AG04449 (cell line): ENCODE measurements at regions of chr3 and their contacts with region 1.

Region 1: GRCh38 chr3:160003520-160004128 is 15.0 kb downstream of the IL12A start:
- DNase-seq: no peak
- H3K4me3 ChIP-seq: no peak overlapping the region
- CTCF ChIP-seq: peak; percentile 65

Region 2: DNA sequence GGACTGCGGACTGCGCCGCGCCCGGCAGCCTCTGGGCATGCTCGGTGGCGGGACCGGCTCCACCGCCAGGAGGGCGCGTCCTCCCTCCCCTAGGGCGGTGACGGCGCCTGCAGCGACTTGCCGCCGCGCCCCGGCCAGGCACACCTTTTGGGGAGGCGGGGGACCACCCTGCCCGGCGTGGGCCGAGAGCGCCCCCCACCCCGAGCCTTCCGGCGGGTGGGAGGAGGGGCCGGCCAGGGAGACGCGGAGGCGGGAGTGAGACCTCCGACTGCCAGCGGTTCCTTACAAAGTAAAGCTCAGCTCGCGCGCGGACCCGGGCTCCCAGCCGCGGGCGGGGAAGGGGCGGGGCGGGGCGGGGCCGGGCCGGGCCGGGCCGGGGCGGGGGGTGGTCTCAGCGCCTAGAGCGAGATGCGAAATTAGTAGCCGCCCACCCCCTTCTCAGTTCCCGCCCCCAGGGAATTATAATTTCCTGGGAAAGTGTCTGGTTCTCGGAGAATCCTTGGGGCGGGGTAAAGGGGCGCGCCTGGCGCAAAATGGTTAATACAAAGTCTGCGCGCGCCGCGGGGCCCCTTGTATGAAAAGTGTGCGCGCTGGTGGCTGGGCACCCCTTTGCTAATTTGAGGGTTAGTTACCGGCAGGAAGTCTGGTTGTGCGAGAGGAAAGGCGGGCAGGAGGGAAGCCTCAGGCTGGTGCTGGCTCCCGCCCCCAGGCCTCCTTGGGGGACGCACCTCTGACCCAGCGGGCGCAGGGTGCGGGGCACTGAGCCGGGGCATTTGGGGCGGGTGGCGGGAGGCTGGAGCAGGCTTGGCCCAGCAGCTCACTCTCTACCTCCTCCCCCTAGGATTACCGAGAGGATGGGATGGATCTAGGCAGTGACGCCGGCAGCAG is 239.8 kb before region 1 on chr3:
- CTCF ChIA-PET with region 1: interaction called, 10 read pairs
- POLR2A ChIA-PET with region 1: interaction called, 3 read pairs
- DNase-seq: no peak
- H3K4me3 ChIP-seq: peak overlapping the region; percentile 89
- CTCF ChIP-seq: peak; percentile 21

Region 3: DNA sequence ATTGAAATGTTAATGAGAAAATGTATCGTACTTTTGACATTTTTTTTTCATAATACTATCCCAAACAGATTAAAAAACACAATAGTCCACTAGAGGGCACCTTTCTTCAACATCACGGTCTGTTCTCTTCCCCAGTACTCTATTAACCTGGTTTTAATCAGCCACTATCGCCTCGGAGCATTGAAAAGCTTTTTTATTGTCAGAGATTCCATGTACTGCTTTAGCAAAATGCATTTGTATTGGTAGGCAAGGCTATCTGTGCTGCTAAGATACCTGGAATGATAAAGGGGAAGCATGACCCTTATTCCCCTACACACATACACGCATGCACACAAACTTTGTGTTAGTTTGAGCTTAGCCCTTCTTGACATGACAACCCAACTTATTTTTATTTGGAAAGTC is 175.1 kb before region 1 on chr3:
- CTCF ChIA-PET with region 1: interaction called, 253 read pairs
- POLR2A ChIA-PET with region 1: no interaction called
- DNase-seq: no peak
- H3K4me3 ChIP-seq: no peak overlapping the region
- CTCF ChIP-seq: peak; percentile 33

Region 4: GRCh38 chr3:159884661-159885402 is 118.8 kb before region 1 on chr3:
- CTCF ChIA-PET with region 1: interaction called, 683 read pairs
- POLR2A ChIA-PET with region 1: interaction called, 5 read pairs
- DNase-seq: no peak
- H3K4me3 ChIP-seq: no peak overlapping the region
- CTCF ChIP-seq: peak; percentile 31

Region 5: GRCh38 chr3:159910991-159911663 is 92.5 kb before region 1 on chr3:
- CTCF ChIA-PET with region 1: interaction called, 13 read pairs
- POLR2A ChIA-PET with region 1: no interaction called
- DNase-seq: no peak
- H3K4me3 ChIP-seq: no peak overlapping the region
- CTCF ChIP-seq: no peak

Region 6: GRCh38 chr3:159953325-159954085 is 50.1 kb before region 1 on chr3:
- CTCF ChIA-PET with region 1: interaction called, 11 read pairs
- POLR2A ChIA-PET with region 1: no interaction called
- DNase-seq: no peak
- H3K4me3 ChIP-seq: no peak overlapping the region
- CTCF ChIP-seq: no peak

Region 7: GRCh38 chr3:160180581-160181216 is 177.1 kb after region 1 on chr3:
- CTCF ChIA-PET with region 1: no interaction called
- POLR2A ChIA-PET with region 1: no interaction called
- DNase-seq: peak; percentile 53
- H3K4me3 ChIP-seq: no peak overlapping the region
- CTCF ChIP-seq: no peak

Region 8: GRCh38 chr3:160355826-160356225 is 352.2 kb after region 1 on chr3:
- CTCF ChIA-PET with region 1: no interaction called
- POLR2A ChIA-PET with region 1: no interaction called
- DNase-seq: no peak
- H3K4me3 ChIP-seq: no peak overlapping the region
- CTCF ChIP-seq: no peak

Region 9: DNA sequence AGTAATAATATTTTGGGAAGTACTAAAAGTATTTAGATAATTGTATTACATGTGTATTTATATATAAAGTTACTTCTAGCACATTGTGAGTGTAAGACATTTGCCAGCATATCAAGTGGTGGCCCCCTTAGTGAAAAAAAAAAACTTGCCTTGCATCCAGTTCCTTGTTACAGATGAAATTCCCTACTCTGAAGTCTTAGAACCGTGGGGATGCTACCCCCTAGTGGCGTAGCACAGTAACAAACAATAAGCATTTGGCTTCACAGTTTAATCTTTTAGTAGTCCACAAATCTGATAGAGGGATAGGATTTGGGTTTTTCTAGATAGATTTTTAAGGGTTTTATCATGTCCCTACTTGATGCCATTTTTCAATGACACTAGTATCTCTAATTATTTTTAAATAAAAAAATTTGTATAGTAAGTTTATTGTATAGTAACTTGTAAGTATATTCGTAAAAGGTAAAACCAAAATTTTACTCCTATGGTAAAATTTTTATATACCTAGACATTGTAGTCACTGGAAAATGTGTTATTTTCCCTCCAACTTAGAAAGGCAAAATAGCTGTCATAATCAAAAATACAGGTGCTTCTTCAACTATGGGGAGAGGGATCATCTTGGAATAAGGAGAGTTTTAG is 410.1 kb after region 1 on chr3:
- CTCF ChIA-PET with region 1: interaction called, 21 read pairs
- POLR2A ChIA-PET with region 1: no interaction called
- DNase-seq: no peak
- H3K4me3 ChIP-seq: no peak overlapping the region
- CTCF ChIP-seq: peak; percentile 70